ENCODE measurements at regions of chr2 and their contacts with region 1.

Region 1: GRCh38 chr2:101349893-101350662 is 37.2 kb downstream of the CREG2 start:
- DNase-seq: no peak
- H3K4me3 ChIP-seq: no peak overlapping the region
- H3K27ac ChIP-seq: no peak overlapping the region
- H3K4me1 ChIP-seq: peaks cover 0 to 5% (median under 1%) of the 10 kb centered on the region in 4 experiments; a peak in 3 of 7 replicates
- H3K27me3 ChIP-seq: no peaks in the 10 kb centered on the region
- CTCF ChIP-seq: peak in 2 of 3 experiments; percentile 9 to 40; a peak in 2 of 4 replicates
- EP300 ChIP-seq: no peak
- POLR2A ChIP-seq: no peak
- RAD21 ChIP-seq: no peak; a peak in 1 of 4 replicates

Region 2: DNA sequence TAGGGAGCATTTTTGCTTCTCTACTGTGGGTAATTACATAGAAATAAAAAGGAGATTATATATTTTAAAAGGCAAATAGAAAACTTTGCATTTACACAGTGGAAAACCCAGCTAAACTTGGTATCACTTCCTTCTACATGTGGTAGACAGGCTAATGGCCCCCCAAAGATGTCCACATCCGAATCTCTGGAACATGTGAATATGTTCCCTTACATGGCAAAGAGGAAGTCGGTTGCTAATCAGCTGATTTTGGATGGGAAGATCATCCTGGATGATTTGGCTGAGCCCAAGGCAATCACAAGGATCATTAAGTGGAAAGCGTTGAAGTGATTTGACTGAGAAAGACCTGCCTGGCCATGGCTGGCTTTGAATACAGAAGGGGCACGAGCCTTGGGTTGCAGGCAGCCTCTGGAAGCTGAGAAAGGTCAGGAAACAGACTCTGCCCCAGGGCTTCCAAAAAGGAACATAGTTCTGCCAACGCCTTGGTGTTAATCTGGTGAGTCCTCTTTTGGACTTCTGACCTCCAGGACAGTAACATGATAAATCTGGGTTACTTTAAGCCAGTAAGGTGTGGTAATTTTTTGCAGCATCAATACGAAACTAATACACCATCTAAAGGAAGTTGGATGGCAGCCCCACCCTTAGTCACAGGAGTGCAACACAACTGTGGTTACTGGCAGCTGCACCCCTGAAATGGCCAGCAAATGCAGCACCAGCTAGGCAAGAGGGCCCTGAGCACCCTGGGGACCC is 11.2 kb after region 1 on chr2:
- CTCF ChIA-PET with region 1: interaction called, 33 read pairs
- POLR2A ChIA-PET with region 1: no interaction called
- DNase-seq: no peak
- H3K4me3 ChIP-seq: no peak overlapping the region
- H3K27ac ChIP-seq: no peak overlapping the region
- H3K4me1 ChIP-seq: peaks cover 2 to 7% (median 2%) of the 10 kb centered on the region in 4 experiments; a peak in 5 of 7 replicates
- H3K27me3 ChIP-seq: no peaks in the 10 kb centered on the region
- CTCF ChIP-seq: no peak
- EP300 ChIP-seq: no peak
- POLR2A ChIP-seq: no peak
- RAD21 ChIP-seq: no peak

Region 3: DNA sequence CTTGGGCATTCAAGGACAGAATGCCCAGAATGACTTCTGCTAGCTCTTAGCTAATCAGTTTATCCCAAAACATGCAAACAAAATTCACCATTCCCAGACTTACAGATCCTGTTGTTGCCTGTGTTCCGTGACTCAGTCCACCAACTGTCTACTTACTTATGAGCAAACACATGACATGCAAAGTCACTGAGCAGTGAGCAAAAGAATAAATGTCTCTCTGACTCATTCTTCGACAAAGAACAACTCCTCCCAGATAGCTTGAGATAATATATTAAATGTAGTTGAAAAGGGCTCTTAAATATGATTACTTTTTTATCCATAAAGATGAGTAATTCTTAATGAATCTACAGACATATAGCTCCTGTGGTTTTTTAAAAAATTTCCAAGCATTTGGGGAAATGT is 46.2 kb after region 1 on chr2:
- CTCF ChIA-PET with region 1: interaction called, 13 read pairs
- POLR2A ChIA-PET with region 1: no interaction called
- DNase-seq: no peak
- H3K4me3 ChIP-seq: no peak overlapping the region
- H3K27ac ChIP-seq: no peak overlapping the region
- H3K4me1 ChIP-seq: peaks cover 1 to 7% (median 3%) of the 10 kb centered on the region in 4 experiments; a peak in 4 of 7 replicates
- H3K27me3 ChIP-seq: no peaks in the 10 kb centered on the region
- CTCF ChIP-seq: no peak
- EP300 ChIP-seq: no peak
- POLR2A ChIP-seq: no peak
- RAD21 ChIP-seq: no peak

Measured in H1 (cell line).